Activated CD4-positive, alpha-beta T cell treated with anti-CD3 and anti-CD28 coated beads for 36 hours (primary cell): ENCODE measurements at regions of chr16 and their contacts with region 1.

Region 1: GRCh38 chr16:23952128-23952970 is 116.6 kb downstream of the PRKCB start:
- DNase-seq: peak; percentile 67
- ATAC-seq: peak; percentile 75
- H3K4me3 Mint-ChIP-seq: peak overlapping the region; percentile 13
- H3K27ac Mint-ChIP-seq: peak overlapping the region; percentile 84
- H3K4me1 Mint-ChIP-seq: peaks cover 82% of the 10 kb centered on the region
- H3K27me3 Mint-ChIP-seq: no peaks in the 10 kb centered on the region

Region 2: GRCh38 chr16:23466066-23466885 is 486.1 kb before region 1 on chr16:
- CTCF ChIA-PET with region 1: no interaction called
- POLR2A ChIA-PET with region 1: no interaction called
- intact Hi-C with region 1: no loop called
- DNase-seq: peak; percentile 10
- ATAC-seq: peak; percentile 26
- H3K4me3 Mint-ChIP-seq: no peak overlapping the region
- H3K27ac Mint-ChIP-seq: peak overlapping the region; percentile 34
- H3K4me1 Mint-ChIP-seq: no peaks in the 10 kb centered on the region
- H3K27me3 Mint-ChIP-seq: no peaks in the 10 kb centered on the region

Region 3: GRCh38 chr16:23835390-23836077 is 116.8 kb before region 1 on chr16 and contains the start of gene PRKCB:
- CTCF ChIA-PET with region 1: interaction called, 4 read pairs
- POLR2A ChIA-PET with region 1: interaction called, 3 read pairs
- intact Hi-C with region 1: loop called in 1 of 2 experiments (anchors 2 kb)
- DNase-seq: peak; percentile 95
- ATAC-seq: peak; percentile 79
- H3K4me3 Mint-ChIP-seq: peak within 1 kb of the TSS; percentile 80
- H3K27ac Mint-ChIP-seq: peak within 1 kb of the TSS; percentile 59
- H3K4me1 Mint-ChIP-seq: peaks cover 54% of the 10 kb centered on the region
- H3K27me3 Mint-ChIP-seq: peaks cover 2% of the 10 kb centered on the region
- total RNA-seq, gene PRKCB: 57.5 to 83.8 TPM

Region 4: DNA sequence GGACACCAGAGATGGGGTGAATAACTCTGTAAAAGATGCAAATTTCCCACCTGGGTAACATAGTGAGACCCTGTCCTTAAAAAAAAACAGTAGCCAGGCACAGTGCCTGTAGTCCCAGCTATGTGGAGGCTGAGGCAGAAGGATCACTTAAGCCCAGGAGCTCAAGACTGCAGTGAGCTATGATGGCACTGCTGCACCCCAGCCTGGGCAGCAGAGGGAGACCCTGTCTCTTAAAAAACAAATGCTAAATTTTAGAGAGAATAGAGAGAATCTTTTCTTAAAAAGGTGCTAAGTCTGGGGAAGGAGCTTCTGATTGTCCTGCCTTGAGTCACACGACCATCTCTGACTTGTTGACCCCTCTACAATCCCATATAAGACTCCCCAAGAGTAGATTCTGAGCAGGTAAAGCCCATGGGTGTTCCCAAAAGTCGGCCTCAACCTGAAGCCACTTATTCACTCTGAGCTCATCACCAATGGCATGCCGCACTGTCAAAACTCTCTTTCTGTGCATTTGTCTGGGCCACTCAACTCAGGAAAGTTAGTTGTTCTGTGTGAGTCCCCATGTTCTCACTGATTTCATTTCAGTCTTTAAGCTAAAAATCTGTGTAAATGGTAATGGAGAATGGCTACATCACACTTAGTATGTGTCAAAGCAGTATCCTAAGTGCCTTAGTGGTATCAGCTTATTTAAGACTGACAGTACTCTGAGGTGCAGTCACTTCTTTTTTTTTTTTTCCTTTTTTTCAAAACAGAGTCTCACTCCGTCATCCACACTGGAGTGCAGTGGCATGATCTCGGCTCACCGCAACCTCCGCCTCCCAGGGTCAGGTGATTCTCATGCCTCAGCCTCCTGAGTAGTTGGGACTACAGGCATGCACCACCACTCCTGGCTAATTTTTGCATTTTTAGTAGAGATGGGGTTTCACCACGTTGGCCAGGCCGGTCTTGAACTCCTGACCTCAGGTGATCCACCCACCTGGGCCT is 75.0 kb before region 1 on chr16:
- CTCF ChIA-PET with region 1: no interaction called
- POLR2A ChIA-PET with region 1: no interaction called
- intact Hi-C with region 1: loop called in 1 of 2 experiments (anchors 5 kb)
- DNase-seq: peak; percentile 52
- ATAC-seq: peak; percentile 73
- H3K4me3 Mint-ChIP-seq: no peak overlapping the region
- H3K27ac Mint-ChIP-seq: peak overlapping the region; percentile 55
- H3K4me1 Mint-ChIP-seq: peaks cover 75% of the 10 kb centered on the region
- H3K27me3 Mint-ChIP-seq: no peaks in the 10 kb centered on the region

Region 5: DNA sequence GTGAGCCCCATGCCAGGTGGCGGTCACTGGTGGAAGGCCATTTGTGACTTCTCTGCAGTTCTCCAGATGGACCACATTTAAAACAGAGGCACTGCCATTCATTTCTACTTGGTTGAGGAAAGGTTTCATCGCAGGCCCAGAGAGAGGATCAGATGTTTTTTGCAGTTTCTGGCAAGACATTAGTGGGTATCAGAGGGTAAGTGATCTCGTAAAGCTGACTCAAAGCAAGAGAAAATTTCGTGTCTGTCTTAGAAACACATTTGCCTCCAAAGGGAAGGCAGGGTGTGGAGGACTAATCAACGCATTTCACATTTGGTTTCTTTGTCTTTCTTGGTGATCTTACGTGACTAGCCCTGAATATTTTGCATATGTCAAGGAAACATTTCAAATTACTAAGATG is 34.7 kb before region 1 on chr16:
- CTCF ChIA-PET with region 1: no interaction called
- POLR2A ChIA-PET with region 1: no interaction called
- intact Hi-C with region 1: loop called (anchors 2 to 5 kb)
- DNase-seq: peak; percentile 18
- ATAC-seq: peak; percentile 75
- H3K4me3 Mint-ChIP-seq: no peak overlapping the region
- H3K27ac Mint-ChIP-seq: peak overlapping the region; percentile 69
- H3K4me1 Mint-ChIP-seq: peaks cover 48% of the 10 kb centered on the region
- H3K27me3 Mint-ChIP-seq: no peaks in the 10 kb centered on the region

Region 6: DNA sequence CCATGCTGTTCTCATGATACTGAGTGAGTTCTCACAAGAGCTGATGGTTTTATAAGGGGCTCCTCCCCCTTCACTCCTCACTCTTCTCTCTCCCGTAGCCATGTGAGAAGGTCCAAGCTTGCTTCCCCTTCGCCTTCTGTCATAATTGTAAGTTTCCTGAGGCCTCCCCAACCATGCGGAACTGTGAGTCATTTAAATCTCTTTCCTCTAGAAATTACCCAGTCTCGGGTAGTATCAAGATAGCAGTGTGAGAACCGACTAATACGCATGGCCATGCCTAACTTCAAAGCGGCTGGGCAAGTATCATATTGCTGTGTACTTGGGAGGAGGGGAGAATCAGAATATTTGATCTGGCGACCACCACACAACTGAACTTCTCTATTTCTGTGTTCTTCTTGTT is 28.2 kb before region 1 on chr16:
- CTCF ChIA-PET with region 1: no interaction called
- POLR2A ChIA-PET with region 1: no interaction called
- intact Hi-C with region 1: loop called (anchors 2 to 5 kb)
- DNase-seq: peak; percentile 30
- ATAC-seq: peak; percentile 66
- H3K4me3 Mint-ChIP-seq: no peak overlapping the region
- H3K27ac Mint-ChIP-seq: peak overlapping the region; percentile 40
- H3K4me1 Mint-ChIP-seq: peaks cover 58% of the 10 kb centered on the region
- H3K27me3 Mint-ChIP-seq: no peaks in the 10 kb centered on the region

Region 7: DNA sequence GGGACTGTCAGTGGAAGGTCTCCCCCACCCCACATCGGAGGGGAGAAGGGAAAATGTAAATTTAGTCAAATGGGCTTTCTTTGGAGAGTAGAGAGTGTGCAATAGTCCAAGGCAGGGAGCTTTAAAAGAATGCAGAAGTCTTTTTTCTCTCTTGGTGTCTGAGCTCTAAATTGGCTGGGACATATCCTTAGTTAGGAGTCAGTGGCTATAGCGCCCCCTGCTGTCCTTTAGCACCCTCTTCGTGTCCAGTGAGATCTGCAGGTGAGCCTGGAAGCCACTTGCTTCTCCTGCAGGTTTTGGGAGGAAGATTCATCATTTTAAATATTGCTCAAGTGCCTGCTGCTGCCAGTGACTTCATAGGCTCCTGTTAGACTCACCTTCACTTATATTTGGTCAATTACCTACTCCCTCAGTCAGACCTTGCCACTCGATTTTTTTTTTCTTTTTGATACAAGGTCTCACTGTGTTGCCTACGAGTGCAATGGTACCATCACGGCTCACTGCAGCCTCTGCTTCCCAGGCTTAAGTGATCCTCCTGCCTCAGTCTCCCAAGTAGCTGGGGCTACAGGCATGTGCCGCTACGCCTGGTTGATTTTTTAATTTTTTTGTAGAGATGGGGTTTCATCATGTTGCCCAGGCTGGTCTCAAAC is 58.2 kb after region 1 on chr16:
- CTCF ChIA-PET with region 1: interaction called, 3 read pairs
- POLR2A ChIA-PET with region 1: no interaction called
- intact Hi-C with region 1: loop called (anchors 2 to 5 kb)
- DNase-seq: peak; percentile 90
- ATAC-seq: peak; percentile 54
- H3K4me3 Mint-ChIP-seq: no peak overlapping the region
- H3K27ac Mint-ChIP-seq: no peak overlapping the region
- H3K4me1 Mint-ChIP-seq: peaks cover 46% of the 10 kb centered on the region
- H3K27me3 Mint-ChIP-seq: no peaks in the 10 kb centered on the region